Pancreas (tissue), 10 donors: ENCODE measurements at regions of chr1 and their contacts with region 1.

Region 1: GRCh38 chr1:84669831-84670230 is 20.4 kb downstream of the SSX2IP start:
- DNase-seq: no peak
- ATAC-seq: no peak
- H3K4me3 ChIP-seq: no peak overlapping the region
- H3K27ac ChIP-seq: no peak overlapping the region
- H3K4me1 ChIP-seq: peaks cover 0 to 4% (median 4%) of the 10 kb centered on the region in 3 donors
- H3K27me3 ChIP-seq: no peaks in the 10 kb centered on the region
- CTCF ChIP-seq: no peak

Region 2: DNA sequence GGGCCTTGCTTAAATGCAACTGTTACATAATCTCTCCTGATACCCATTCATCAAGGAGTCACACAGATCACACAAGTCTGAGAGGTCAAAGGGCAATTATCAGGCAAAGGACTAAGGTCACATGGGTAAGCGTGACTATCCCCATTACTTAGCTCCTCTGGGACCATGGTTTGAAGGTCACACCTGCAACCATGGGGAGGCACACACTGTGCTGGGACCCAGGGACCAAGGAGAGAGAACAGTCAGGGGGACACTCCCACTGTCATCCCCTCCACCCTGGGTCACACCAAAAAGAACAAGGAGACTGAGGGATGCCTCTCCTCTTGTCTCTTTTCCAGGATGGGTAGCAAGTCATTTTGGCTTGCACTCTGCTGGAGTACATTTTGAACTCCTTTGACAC is 64.7 kb before region 1 on chr1:
- intact Hi-C with region 1: no loop called
- DNase-seq: no peak
- ATAC-seq: no peak
- H3K4me3 ChIP-seq: no peak overlapping the region
- H3K27ac ChIP-seq: no peak overlapping the region
- H3K4me1 ChIP-seq: no peaks in the 10 kb centered on the region
- H3K27me3 ChIP-seq: no peaks in the 10 kb centered on the region
- CTCF ChIP-seq: no peak

Region 3: DNA sequence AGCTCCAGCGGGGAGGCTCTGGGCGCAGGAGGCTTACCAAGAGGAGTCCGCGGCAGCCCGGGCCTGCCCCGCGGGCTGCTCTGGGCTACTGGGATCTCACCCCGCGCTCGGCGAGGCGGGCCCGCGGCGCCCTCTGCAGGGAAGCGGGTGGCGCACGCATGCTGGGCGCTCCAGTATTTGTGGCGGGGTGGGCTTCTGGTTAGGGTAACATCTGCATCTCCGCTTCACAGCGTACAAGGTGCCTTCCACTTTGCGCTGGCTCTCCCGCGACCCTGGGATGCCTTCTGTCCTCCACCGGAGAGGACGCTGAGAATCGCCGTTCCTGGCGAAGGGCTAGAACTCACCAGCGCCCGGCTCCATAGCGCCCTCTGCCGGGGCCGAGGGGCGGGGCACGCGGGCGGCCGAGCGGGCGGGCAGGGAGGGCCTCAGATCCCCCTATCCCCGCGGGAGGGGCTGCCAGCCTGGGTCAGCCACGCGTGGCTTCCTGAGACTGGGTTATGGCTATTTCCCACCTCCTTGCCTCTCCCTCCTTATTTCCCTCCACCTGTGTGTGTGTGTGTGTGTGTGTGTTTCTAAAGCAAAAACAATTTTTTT is 49.0 kb before region 1 on chr1:
- intact Hi-C with region 1: loop called in 1 of 3 experiments (anchors 10 kb)
- DNase-seq: peak; percentile 61 to 92 (median 80)
- ATAC-seq: peak; percentile 94 to 96 (median 94)
- H3K4me3 ChIP-seq: peak overlapping the region; percentile 26 to 65 (median 52)
- H3K27ac ChIP-seq: peak overlapping the region in 2 of 4 donors; percentile 67 to 73
- H3K4me1 ChIP-seq: peaks cover 0 to 10% (median 5%) of the 10 kb centered on the region in 3 donors
- H3K27me3 ChIP-seq: no peaks in the 10 kb centered on the region
- CTCF ChIP-seq: peak; percentile 90 to 99 (median 98)

Region 4: DNA sequence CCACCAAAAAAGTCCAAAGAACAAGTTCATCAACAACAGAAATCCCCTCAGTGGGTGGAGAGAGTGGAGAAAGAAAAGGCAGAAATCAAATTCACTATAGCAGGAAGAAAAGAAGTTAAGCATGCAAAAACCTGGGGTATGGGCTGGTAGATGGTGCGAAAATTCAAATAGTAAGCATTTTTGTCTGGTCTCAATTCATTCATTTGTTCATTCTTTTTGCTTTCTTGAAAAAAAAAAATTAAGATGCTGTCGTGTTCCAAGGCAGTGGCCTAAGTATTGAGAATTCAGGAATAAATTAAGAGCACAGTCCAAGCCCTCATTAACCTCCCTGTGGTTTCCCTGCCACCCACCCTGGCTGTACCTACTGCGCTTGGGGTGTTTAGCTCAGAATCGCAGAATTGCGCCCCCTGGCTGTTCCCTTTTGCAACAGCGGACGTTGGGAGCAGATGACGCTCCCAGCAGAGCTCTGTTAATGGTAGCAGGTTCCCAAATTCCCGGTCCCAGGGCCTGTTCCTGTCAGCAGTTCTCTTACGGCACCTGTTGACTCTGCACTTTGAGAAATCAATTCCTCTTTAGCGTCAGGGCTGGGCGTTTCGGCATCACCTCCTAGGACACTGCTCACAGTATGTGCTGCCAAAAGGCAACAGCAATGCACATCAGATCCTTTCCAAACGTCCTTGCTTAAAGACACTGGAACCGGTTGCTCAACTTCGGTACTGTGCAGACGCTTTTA is 54.5 kb after region 1 on chr1:
- intact Hi-C with region 1: no loop called
- DNase-seq: no peak
- ATAC-seq: no peak
- H3K4me3 ChIP-seq: no peak overlapping the region
- H3K27ac ChIP-seq: no peak overlapping the region
- H3K4me1 ChIP-seq: peaks cover 4 to 18% (median 15%) of the 10 kb centered on the region in 3 donors
- H3K27me3 ChIP-seq: no peaks in the 10 kb centered on the region
- CTCF ChIP-seq: peak in 1 of 4 donors; percentile 8